ENCODE measurements at regions of chr7 and their contacts with region 1.

Region 1: DNA sequence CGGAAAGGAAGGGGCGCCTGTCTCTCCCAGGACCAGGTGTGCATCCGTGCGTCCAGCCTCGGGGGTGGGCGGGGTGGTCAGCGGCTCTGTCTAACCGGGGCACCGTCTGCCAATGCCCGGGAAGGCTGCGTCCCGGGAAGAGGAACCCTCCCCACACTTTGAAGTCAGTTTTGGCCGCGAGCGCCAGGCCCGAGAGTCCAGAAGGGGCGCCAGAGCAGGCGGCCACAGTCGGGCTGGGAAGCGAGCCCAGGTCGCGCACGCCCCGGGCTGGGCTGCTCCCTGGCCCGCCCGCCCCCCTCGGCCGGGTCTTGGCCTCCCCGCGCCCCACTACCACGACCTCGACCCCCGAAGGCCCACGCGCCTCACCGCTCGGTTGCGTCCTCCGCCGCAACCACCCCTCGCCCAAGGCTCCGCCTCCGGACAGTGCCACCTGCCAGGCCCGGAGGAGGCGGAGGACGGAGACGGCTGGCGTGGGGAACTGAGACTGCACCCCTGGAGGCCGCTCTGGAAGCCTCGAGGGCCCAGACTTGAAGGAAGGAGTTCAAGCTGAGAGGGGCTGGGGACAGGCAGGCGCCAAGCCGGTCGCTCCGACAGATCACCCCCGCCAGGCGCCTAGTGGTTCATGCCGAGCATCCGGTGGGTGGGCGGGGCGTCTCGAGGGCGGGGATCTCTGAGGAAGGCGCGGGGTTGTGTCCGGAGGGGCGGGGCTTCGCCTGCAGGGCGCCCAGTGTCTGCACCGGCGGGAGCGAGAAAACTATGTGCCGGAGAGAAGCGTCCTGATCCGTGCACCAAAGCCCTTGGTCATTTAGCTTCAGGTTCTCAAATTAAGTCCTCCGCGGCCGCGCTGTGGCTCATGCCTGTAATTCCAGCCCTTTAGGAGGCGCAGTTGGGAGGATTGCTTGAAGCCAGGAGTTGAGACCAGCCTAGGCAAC is at the start of gene BRAT1:
- DNase-seq: peak; percentile 91 to 99 (median 95)
- ATAC-seq: peak; percentile 91
- H3K4me3 ChIP-seq: peak within 1 kb of the TSS; percentile 84
- H3K4me3 Mint-ChIP-seq: peak within 1 kb of the TSS; percentile 94
- H3K27ac ChIP-seq: peak within 1 kb of the TSS; percentile 88 to 99
- H3K27ac Mint-ChIP-seq: peak within 1 kb of the TSS; percentile 84
- H3K4me1 ChIP-seq: peaks cover 55% of the 10 kb centered on the region
- H3K4me1 Mint-ChIP-seq: peaks cover 50% of the 10 kb centered on the region
- H3K27me3 ChIP-seq: no peaks in the 10 kb centered on the region
- H3K27me3 Mint-ChIP-seq: no peaks in the 10 kb centered on the region
- CTCF ChIP-seq: peak; percentile 25
- total RNA-seq, gene BRAT1: 24.1 to 24.5 TPM

Region 2: GRCh38 chr7:1569833-1570633 is 985.4 kb before region 1 on chr7 and contains the start of gene PSMG3:
- CTCF ChIA-PET with region 1: no interaction called
- POLR2A ChIA-PET with region 1: no interaction called
- intact Hi-C with region 1: loop called in 1 of 2 experiments (anchors 5 kb)
- DNase-seq: peak; percentile 75 to 94 (median 86)
- ATAC-seq: peak; percentile 88
- H3K4me3 ChIP-seq: peak within 1 kb of the TSS; percentile 98
- H3K4me3 Mint-ChIP-seq: peak within 1 kb of the TSS; percentile 91
- H3K27ac ChIP-seq: peak within 1 kb of the TSS; percentile 82 to 83
- H3K27ac Mint-ChIP-seq: peak within 1 kb of the TSS; percentile 92
- H3K4me1 ChIP-seq: peaks cover 35% of the 10 kb centered on the region
- H3K4me1 Mint-ChIP-seq: peaks cover 23% of the 10 kb centered on the region
- H3K27me3 ChIP-seq: no peaks in the 10 kb centered on the region
- H3K27me3 Mint-ChIP-seq: no peaks in the 10 kb centered on the region
- CTCF ChIP-seq: peak; percentile 27
- total RNA-seq, gene PSMG3: 13.3 to 13.8 TPM

Region 3: DNA sequence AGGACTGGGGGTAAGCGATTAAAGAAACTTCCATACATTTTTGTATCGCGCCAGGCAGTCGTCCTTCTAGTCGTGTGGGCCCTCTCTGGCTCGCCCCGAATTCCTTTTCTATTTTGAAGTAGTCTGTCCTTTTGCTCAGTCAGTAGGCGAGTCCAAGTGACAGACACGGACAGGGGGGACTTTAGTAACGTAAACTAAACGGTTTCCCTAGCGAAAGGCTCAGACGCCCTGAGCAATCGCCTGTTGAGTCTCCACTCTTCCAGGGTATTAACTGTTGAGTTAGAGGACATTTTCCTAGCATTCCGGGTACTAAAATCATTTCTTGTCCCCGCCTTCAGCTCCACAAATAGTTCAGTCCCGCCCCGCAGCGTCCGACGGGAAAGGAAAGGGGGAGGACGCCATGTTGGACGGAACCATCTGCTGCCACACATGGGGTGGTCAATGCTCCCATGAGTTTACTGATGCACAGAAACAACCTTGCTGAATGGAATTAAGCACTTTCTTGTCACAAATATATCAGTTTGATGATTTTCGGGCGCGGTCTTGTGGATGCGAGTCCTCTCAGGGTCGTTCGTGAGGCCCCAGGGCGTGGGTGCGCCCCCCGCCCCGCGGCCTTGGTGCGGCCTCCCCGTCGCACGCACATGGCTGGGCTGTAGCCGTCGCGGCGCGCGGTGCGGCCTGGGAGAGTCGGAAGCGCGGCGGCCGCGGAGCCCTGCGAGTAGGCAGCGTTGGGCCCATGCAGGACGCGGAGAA is 201.0 kb before region 1 on chr7 and contains the start of gene EIF3B:
- CTCF ChIA-PET with region 1: no interaction called
- POLR2A ChIA-PET with region 1: no interaction called
- intact Hi-C with region 1: loop called in 1 of 2 experiments (anchors 5 kb)
- DNase-seq: peak; percentile 81 to 96 (median 88)
- ATAC-seq: peak; percentile 86
- H3K4me3 ChIP-seq: peak within 1 kb of the TSS; percentile 85
- H3K4me3 Mint-ChIP-seq: peak within 1 kb of the TSS; percentile 92
- H3K27ac ChIP-seq: peak within 1 kb of the TSS; percentile 99 to 100
- H3K27ac Mint-ChIP-seq: peak within 1 kb of the TSS; percentile 100
- H3K4me1 ChIP-seq: peaks cover 53% of the 10 kb centered on the region
- H3K4me1 Mint-ChIP-seq: peaks cover 37% of the 10 kb centered on the region
- H3K27me3 ChIP-seq: no peaks in the 10 kb centered on the region
- H3K27me3 Mint-ChIP-seq: no peaks in the 10 kb centered on the region
- CTCF ChIP-seq: no peak
- total RNA-seq, gene EIF3B: 166 to 167 TPM

Region 4: GRCh38 chr7:2508327-2509215 is 46.8 kb before region 1 on chr7:
- CTCF ChIA-PET with region 1: interaction called, 3 read pairs
- POLR2A ChIA-PET with region 1: interaction called, 5 read pairs
- intact Hi-C with region 1: loop called in 1 of 2 experiments (anchors 2 kb)
- DNase-seq: peak; percentile 71 to 95 (median 84)
- ATAC-seq: peak; percentile 73
- H3K4me3 ChIP-seq: peak overlapping the region; percentile 47
- H3K4me3 Mint-ChIP-seq: peak overlapping the region; percentile 78
- H3K27ac ChIP-seq: peak overlapping the region; percentile 84 to 97
- H3K27ac Mint-ChIP-seq: peak overlapping the region; percentile 98
- H3K4me1 ChIP-seq: peaks cover 70% of the 10 kb centered on the region
- H3K4me1 Mint-ChIP-seq: peaks cover 68% of the 10 kb centered on the region
- H3K27me3 ChIP-seq: no peaks in the 10 kb centered on the region
- H3K27me3 Mint-ChIP-seq: no peaks in the 10 kb centered on the region
- CTCF ChIP-seq: no peak

Region 5: DNA sequence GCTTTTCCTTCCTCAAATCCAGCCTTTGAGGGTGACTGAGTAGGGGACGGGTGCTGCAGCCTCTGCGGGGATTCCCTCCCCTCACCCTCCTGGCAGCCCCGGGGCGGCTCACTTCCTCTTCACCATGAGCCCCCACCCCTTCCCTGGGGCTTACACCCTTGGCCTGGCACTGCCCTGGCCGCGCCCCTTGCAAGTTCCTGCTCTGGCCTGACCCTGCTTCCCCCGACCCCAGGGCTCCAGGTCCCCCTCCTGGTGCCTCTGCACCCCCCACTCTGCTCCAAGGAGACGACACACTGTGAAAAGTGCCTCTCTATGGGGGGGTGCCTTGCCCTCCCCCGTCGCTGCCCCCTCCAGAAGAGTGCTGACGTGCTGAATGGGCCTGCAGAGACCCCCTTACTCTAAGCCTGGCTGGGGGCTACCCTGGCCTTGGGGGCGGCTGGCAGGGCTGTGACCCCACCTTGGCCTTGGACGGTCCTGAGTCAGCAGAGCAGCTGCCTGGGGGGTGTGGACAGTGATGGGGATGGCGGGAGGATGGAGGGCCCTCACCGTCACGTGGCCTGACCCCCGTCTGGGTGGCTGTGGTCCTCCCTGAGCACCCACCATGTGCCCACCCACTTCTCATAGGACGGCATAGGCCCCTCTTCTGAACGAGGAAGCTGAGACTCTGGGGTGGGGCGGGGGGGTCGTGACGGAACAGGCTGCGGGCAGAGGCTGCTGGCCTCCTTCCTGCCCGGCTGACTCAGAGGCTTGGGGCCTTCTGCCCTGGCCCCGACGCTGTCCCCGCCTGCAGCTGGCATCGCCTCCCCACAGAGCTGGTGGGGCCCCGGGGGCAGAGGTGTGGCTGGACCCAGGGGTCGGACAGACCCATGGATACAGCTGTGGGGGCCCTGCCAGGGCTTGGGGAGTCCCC is 26.0 kb before region 1 on chr7:
- CTCF ChIA-PET with region 1: no interaction called
- POLR2A ChIA-PET with region 1: interaction called, 5 read pairs
- intact Hi-C with region 1: loop called in 1 of 2 experiments (anchors 2 kb)
- DNase-seq: peak in 11 of 14 experiments; percentile 44 to 87 (median 60)
- ATAC-seq: peak; percentile 27
- H3K4me3 ChIP-seq: peak overlapping the region; percentile 35
- H3K4me3 Mint-ChIP-seq: peak overlapping the region; percentile 84
- H3K27ac ChIP-seq: peak overlapping the region; percentile 88 to 98
- H3K27ac Mint-ChIP-seq: peak overlapping the region; percentile 98
- H3K4me1 ChIP-seq: peaks cover 71% of the 10 kb centered on the region
- H3K4me1 Mint-ChIP-seq: peaks cover 54% of the 10 kb centered on the region
- H3K27me3 ChIP-seq: no peaks in the 10 kb centered on the region
- H3K27me3 Mint-ChIP-seq: no peaks in the 10 kb centered on the region
- CTCF ChIP-seq: no peak

Region 6: GRCh38 chr7:3112479-3113134 is 557.2 kb after region 1 on chr7:
- CTCF ChIA-PET with region 1: no interaction called
- POLR2A ChIA-PET with region 1: no interaction called
- intact Hi-C with region 1: no loop called
- DNase-seq: peak in 3 of 14 experiments; percentile 25 to 67 (median 47)
- ATAC-seq: peak; percentile 41
- H3K4me3 ChIP-seq: no peak overlapping the region
- H3K4me3 Mint-ChIP-seq: peak overlapping the region; percentile 36
- H3K27ac ChIP-seq: no peak overlapping the region
- H3K27ac Mint-ChIP-seq: peak overlapping the region; percentile 48
- H3K4me1 ChIP-seq: peaks cover 55% of the 10 kb centered on the region
- H3K4me1 Mint-ChIP-seq: peaks cover 88% of the 10 kb centered on the region
- H3K27me3 ChIP-seq: no peaks in the 10 kb centered on the region
- H3K27me3 Mint-ChIP-seq: no peaks in the 10 kb centered on the region
- CTCF ChIP-seq: no peak